ENCODE measurements at regions of chr5 and their contacts with region 1.

Region 1: DNA sequence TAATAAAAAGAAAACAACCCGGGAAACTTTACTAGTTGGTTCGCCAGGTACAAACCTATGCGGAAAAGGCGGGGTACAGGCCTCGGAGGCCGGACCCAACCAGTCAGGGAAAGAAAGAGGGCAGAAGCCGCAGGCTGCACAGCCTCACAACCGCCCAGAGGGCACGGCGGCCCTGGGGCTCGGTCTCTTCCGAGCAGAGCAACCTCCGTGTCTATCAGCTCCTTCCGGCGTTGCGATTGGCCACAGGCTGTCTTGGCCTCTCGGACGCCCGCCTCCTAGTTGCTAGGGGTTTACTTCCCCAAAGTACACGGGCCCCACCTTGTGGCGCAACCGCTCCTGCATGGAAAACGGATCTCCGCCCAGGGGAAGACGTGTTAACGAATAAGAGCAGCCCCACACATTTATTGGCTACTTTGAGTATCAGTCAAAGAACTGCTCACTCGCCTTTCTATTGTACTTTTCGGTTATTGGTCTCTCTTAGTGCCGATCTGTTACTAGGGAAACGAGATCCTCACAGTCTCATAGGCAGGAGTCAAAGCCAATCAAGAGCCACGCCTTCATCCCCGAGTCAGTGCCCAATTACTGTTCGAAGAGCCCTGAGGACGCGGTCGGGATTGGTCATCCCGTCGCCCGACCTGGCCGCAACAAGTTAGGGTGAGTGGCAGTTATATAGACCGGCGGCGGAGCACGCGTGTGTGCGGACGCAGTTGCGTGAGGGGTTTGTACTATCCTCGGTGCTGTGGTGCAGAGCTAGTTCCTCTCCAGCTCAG is at the start of gene G3BP1:
- DNase-seq: peak; percentile 90
- ATAC-seq: peak; percentile 76
- H3K4me3 Mint-ChIP-seq: peak within 1 kb of the TSS; percentile 94
- H3K27ac Mint-ChIP-seq: peak within 1 kb of the TSS; percentile 88
- H3K4me1 Mint-ChIP-seq: peaks cover 48% of the 10 kb centered on the region
- H3K27me3 Mint-ChIP-seq: no peaks in the 10 kb centered on the region
- CTCF ChIP-seq: no peak
- total RNA-seq, gene G3BP1: 227 and 239 TPM in 2 replicates

Region 2: GRCh38 chr5:150758531-150759333 is 1012.7 kb before region 1 on chr5 and contains the start of gene DCTN4:
- CTCF ChIA-PET with region 1: no interaction called
- POLR2A ChIA-PET with region 1: interaction called, 3 read pairs
- intact Hi-C with region 1: loop called (anchors 5 kb)
- DNase-seq: peak; percentile 87
- ATAC-seq: peak; percentile 93
- H3K4me3 Mint-ChIP-seq: no peak within 1 kb of the TSS
- H3K27ac Mint-ChIP-seq: no peak within 1 kb of the TSS
- H3K4me1 Mint-ChIP-seq: peaks cover 17% of the 10 kb centered on the region
- H3K27me3 Mint-ChIP-seq: peaks cover 9% of the 10 kb centered on the region
- CTCF ChIP-seq: no peak
- total RNA-seq, gene DCTN4: 49.0 and 49.8 TPM in 2 replicates

Region 3: GRCh38 chr5:151447174-151448037 is 324.0 kb before region 1 on chr5 and contains the start of gene SLC36A1:
- CTCF ChIA-PET with region 1: interaction called, 4 read pairs
- POLR2A ChIA-PET with region 1: interaction called, 22 read pairs
- intact Hi-C with region 1: loop called (anchors 1 kb)
- DNase-seq: peak; percentile 94
- ATAC-seq: peak; percentile 95
- H3K4me3 Mint-ChIP-seq: peak within 1 kb of the TSS; percentile 87
- H3K27ac Mint-ChIP-seq: peak within 1 kb of the TSS; percentile 89
- H3K4me1 Mint-ChIP-seq: peaks cover 24% of the 10 kb centered on the region
- H3K27me3 Mint-ChIP-seq: peaks cover 19% of the 10 kb centered on the region
- CTCF ChIP-seq: peak; percentile 88
- total RNA-seq, gene SLC36A1: 9.9 and 14.1 TPM in 2 replicates

Region 4: DNA sequence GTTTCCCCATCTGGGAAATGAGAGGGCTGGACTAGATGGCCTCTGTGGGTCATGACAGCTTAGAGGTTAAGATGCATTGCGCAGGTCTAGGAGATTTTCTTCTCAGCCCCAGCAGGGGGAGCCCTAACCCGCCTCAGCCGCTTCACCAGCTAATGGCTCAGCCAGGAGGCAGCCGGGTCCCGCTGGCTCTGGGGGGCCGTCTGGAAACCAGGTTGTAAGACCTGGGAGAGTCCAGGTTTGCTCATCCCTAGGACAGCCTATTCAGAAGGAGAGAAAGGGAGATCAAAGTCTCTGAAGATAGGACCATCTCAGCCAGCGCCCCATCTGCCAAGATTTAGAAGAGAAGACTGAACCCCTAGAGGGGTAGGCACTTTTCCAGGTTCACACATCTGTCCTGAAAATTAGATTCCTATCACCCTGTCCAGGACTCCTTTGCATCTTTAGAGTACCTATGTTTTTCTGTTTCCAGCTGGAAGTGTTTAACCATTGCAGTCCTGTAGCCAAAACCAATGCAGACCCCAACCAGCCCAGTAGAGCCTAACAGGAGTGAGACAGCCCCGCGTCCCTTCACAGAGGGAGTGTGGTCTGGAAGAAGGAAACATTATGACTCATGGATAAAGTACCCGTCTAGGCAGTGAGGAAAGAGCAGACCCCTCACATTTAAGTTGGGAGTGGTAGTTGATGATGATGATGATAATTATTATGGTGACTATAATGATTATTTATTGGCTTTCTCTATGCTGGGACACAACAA is 112.3 kb before region 1 on chr5:
- CTCF ChIA-PET with region 1: interaction called, 13 read pairs
- POLR2A ChIA-PET with region 1: interaction called, 30 read pairs
- intact Hi-C with region 1: loop called (anchors 1 kb)
- DNase-seq: peak; percentile 77
- ATAC-seq: peak; percentile 88
- H3K4me3 Mint-ChIP-seq: no peak overlapping the region
- H3K27ac Mint-ChIP-seq: no peak overlapping the region
- H3K4me1 Mint-ChIP-seq: peaks cover 24% of the 10 kb centered on the region
- H3K27me3 Mint-ChIP-seq: peaks cover 14% of the 10 kb centered on the region
- CTCF ChIP-seq: no peak

Region 5: GRCh38 chr5:151740336-151740942 is 31.0 kb before region 1 on chr5:
- CTCF ChIA-PET with region 1: interaction called, 11 read pairs
- POLR2A ChIA-PET with region 1: interaction called, 33 read pairs
- intact Hi-C with region 1: loop called (anchors 1 kb)
- DNase-seq: no peak
- ATAC-seq: peak; percentile 69
- H3K4me3 Mint-ChIP-seq: no peak overlapping the region
- H3K27ac Mint-ChIP-seq: no peak overlapping the region
- H3K4me1 Mint-ChIP-seq: peaks cover 16% of the 10 kb centered on the region
- H3K27me3 Mint-ChIP-seq: no peaks in the 10 kb centered on the region
- CTCF ChIP-seq: peak; percentile 68

Region 6: GRCh38 chr5:151758430-151759241 is 12.8 kb before region 1 on chr5 and contains the start of gene ATOX1:
- CTCF ChIA-PET with region 1: interaction called, 4 read pairs
- POLR2A ChIA-PET with region 1: interaction called, 134 read pairs
- intact Hi-C with region 1: loop called (anchors 1 kb)
- DNase-seq: peak; percentile 91
- ATAC-seq: peak; percentile 100
- H3K4me3 Mint-ChIP-seq: peak within 1 kb of the TSS; percentile 89
- H3K27ac Mint-ChIP-seq: peak within 1 kb of the TSS; percentile 84
- H3K4me1 Mint-ChIP-seq: peaks cover 38% of the 10 kb centered on the region
- H3K27me3 Mint-ChIP-seq: no peaks in the 10 kb centered on the region
- CTCF ChIP-seq: no peak
- total RNA-seq, gene ATOX1: 61.2 and 66.6 TPM in 2 replicates

Region 7: GRCh38 chr5:151799407-151799806 is 28.0 kb after region 1 on chr5:
- CTCF ChIA-PET with region 1: no interaction called
- POLR2A ChIA-PET with region 1: interaction called, 10 read pairs
- intact Hi-C with region 1: no loop called
- DNase-seq: no peak
- ATAC-seq: no peak
- H3K4me3 Mint-ChIP-seq: no peak overlapping the region
- H3K27ac Mint-ChIP-seq: no peak overlapping the region
- H3K4me1 Mint-ChIP-seq: no peaks in the 10 kb centered on the region
- H3K27me3 Mint-ChIP-seq: no peaks in the 10 kb centered on the region
- CTCF ChIP-seq: no peak